ENCODE measurements at regions of chr1 and their contacts with region 1.

Region 1: GRCh38 chr1:201511941-201512539 is 5.1 kb upstream of the CSRP1 start:
- DNase-seq: peak; percentile 54 to 73 (median 67)
- H3K4me3 ChIP-seq: peak overlapping the region in 1 of 3 experiments; percentile 35
- H3K4me3 Mint-ChIP-seq: no peak overlapping the region
- H3K27ac ChIP-seq: peak overlapping the region in 1 of 2 donors; percentile 40
- H3K27ac Mint-ChIP-seq: peak overlapping the region; percentile 40 to 88 (median 79)
- H3K4me1 ChIP-seq: peaks cover 26 to 38% of the 10 kb centered on the region in 2 donors
- H3K4me1 Mint-ChIP-seq: peaks cover 49% of the 10 kb centered on the region
- H3K27me3 ChIP-seq: no peaks in the 10 kb centered on the region
- H3K27me3 Mint-ChIP-seq: peaks cover 0 to 1% (median 0%) of the 10 kb centered on the region in 3 donors
- CTCF ChIP-seq: no peak

Region 2: GRCh38 chr1:201436393-201436792 is 75.6 kb before region 1 on chr1:
- intact Hi-C with region 1: no loop called
- DNase-seq: no peak
- H3K4me3 ChIP-seq: no peak overlapping the region
- H3K4me3 Mint-ChIP-seq: no peak overlapping the region
- H3K27ac ChIP-seq: no peak overlapping the region
- H3K27ac Mint-ChIP-seq: no peak overlapping the region
- H3K4me1 ChIP-seq: peaks cover 3% of the 10 kb centered on the region in 2 donors
- H3K4me1 Mint-ChIP-seq: peaks cover 7% of the 10 kb centered on the region
- H3K27me3 ChIP-seq: no peaks in the 10 kb centered on the region
- H3K27me3 Mint-ChIP-seq: peaks cover 7 to 18% (median 14%) of the 10 kb centered on the region in 3 donors
- CTCF ChIP-seq: no peak

Region 3: GRCh38 chr1:201447911-201448871 is 63.8 kb before region 1 on chr1:
- intact Hi-C with region 1: loop called in 1 of 2 experiments (anchors 5 kb)
- DNase-seq: peak; percentile 24 to 52 (median 31)
- H3K4me3 ChIP-seq: no peak overlapping the region
- H3K4me3 Mint-ChIP-seq: peak overlapping the region in 1 of 2 donors; percentile 51
- H3K27ac ChIP-seq: no peak overlapping the region
- H3K27ac Mint-ChIP-seq: no peak overlapping the region
- H3K4me1 ChIP-seq: peaks cover 5 to 7% of the 10 kb centered on the region in 2 donors
- H3K4me1 Mint-ChIP-seq: peaks cover 14% of the 10 kb centered on the region
- H3K27me3 ChIP-seq: no peaks in the 10 kb centered on the region
- H3K27me3 Mint-ChIP-seq: peaks cover 9 to 17% (median 16%) of the 10 kb centered on the region in 3 donors
- CTCF ChIP-seq: peak; percentile 76

Region 4: GRCh38 chr1:201481761-201482493 is 30.1 kb before region 1 on chr1:
- intact Hi-C with region 1: loop called (anchors 1 to 2 kb)
- DNase-seq: peak; percentile 68 to 77 (median 73)
- H3K4me3 ChIP-seq: peak overlapping the region in 1 of 3 experiments; percentile 77
- H3K4me3 Mint-ChIP-seq: peak overlapping the region; percentile 81 to 89
- H3K27ac ChIP-seq: no peak overlapping the region
- H3K27ac Mint-ChIP-seq: peak overlapping the region in 1 of 7 donors; percentile 70
- H3K4me1 ChIP-seq: peaks cover 25 to 26% of the 10 kb centered on the region in 2 donors
- H3K4me1 Mint-ChIP-seq: peaks cover 28% of the 10 kb centered on the region
- H3K27me3 ChIP-seq: peaks cover 0 to 12% of the 10 kb centered on the region in 2 donors
- H3K27me3 Mint-ChIP-seq: peaks cover 12 to 18% (median 15%) of the 10 kb centered on the region in 3 donors
- CTCF ChIP-seq: peak; percentile 97